Activated CD8-positive, alpha-beta T cell treated with anti-CD3 and anti-CD28 coated beads for 36 hours (primary cell): ENCODE measurements at regions of chr13 and their contacts with region 1.

Region 1: GRCh38 chr13:32246468-32246867 is 68.7 kb downstream of the ZAR1L start:
- DNase-seq: peak; percentile 61
- ATAC-seq: peak; percentile 78
- H3K4me3 Mint-ChIP-seq: no peak overlapping the region
- H3K27ac Mint-ChIP-seq: no peak overlapping the region
- H3K4me1 Mint-ChIP-seq: no peaks in the 10 kb centered on the region
- H3K27me3 Mint-ChIP-seq: no peaks in the 10 kb centered on the region
- CTCF ChIP-seq: peak; percentile 65

Region 2: DNA sequence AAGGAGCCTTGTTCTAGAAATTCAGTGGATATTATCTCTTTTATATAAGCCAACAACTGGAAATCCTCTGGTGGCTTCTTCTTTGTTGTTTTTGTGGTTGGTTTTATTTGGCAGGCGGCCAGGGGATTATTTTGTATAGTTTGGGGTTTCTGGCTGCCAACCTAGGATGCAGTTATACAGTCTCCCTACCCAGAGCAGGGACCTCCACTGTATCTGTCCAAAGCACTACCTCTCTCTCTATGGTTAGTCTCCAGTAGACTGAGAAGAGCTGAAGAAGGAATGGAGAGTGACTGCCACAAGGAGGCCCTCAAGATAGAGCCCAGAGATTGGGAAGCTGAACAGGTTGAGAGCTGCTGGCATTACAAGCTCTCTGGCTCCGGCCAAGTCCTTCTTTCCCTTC is 11.5 kb before region 1 on chr13:
- CTCF ChIA-PET with region 1: interaction called, 18 read pairs
- POLR2A ChIA-PET with region 1: no interaction called
- intact Hi-C with region 1: no loop called
- DNase-seq: no peak
- ATAC-seq: no peak
- H3K4me3 Mint-ChIP-seq: no peak overlapping the region
- H3K27ac Mint-ChIP-seq: no peak overlapping the region
- H3K4me1 Mint-ChIP-seq: no peaks in the 10 kb centered on the region
- H3K27me3 Mint-ChIP-seq: no peaks in the 10 kb centered on the region
- CTCF ChIP-seq: no peak